ENCODE measurements at regions of chr4 and their contacts with region 1.

Region 1: DNA sequence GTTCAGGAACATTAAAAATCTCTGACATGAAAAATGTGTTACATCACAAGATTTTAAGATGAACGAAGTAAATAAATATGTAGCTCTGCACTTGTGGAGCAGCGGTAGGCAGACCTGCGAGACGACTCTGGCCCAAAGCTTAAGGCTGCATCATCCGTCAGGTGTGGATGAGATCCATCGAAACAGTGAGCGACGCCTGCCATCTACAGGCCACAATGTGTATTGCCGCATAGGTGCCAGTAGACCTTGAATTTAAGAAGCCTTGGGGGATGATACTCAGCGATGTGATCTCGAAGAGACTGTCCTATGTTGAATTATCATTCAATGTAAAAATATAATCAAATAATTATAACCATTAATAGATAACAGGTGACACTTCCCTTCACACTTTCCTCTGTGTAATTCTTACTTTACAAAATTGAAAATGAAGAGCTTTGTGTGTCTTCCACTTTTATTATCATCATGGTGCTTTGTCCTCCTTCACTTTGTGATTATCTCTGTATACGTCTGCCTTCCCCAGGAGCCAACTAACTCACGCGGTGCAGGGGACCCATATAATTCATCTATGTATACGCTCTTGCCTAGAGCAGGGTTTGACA is 851.0 kb downstream of the RAB28 start:
- H3K4me3 Mint-ChIP-seq: no peak overlapping the region
- H3K27ac Mint-ChIP-seq: no peak overlapping the region
- H3K4me1 Mint-ChIP-seq: no peaks in the 10 kb centered on the region
- H3K27me3 Mint-ChIP-seq: no peaks in the 10 kb centered on the region

Region 2: GRCh38 chr4:11765849-11766453 is 867.2 kb before region 1 on chr4:
- intact Hi-C with region 1: loop called (anchors 1 kb)
- H3K4me3 Mint-ChIP-seq: no peak overlapping the region
- H3K27ac Mint-ChIP-seq: no peak overlapping the region
- H3K4me1 Mint-ChIP-seq: no peaks in the 10 kb centered on the region
- H3K27me3 Mint-ChIP-seq: no peaks in the 10 kb centered on the region

Region 3: GRCh38 chr4:11805842-11806241 is 827.3 kb before region 1 on chr4:
- intact Hi-C with region 1: loop called (anchors 5 kb)
- H3K4me3 Mint-ChIP-seq: no peak overlapping the region
- H3K27ac Mint-ChIP-seq: no peak overlapping the region
- H3K4me1 Mint-ChIP-seq: no peaks in the 10 kb centered on the region
- H3K27me3 Mint-ChIP-seq: no peaks in the 10 kb centered on the region

Region 4: GRCh38 chr4:12041828-12042227 is 591.3 kb before region 1 on chr4:
- intact Hi-C with region 1: loop called (anchors 1 kb)
- H3K4me3 Mint-ChIP-seq: no peak overlapping the region
- H3K27ac Mint-ChIP-seq: no peak overlapping the region
- H3K4me1 Mint-ChIP-seq: no peaks in the 10 kb centered on the region
- H3K27me3 Mint-ChIP-seq: no peaks in the 10 kb centered on the region

Region 5: DNA sequence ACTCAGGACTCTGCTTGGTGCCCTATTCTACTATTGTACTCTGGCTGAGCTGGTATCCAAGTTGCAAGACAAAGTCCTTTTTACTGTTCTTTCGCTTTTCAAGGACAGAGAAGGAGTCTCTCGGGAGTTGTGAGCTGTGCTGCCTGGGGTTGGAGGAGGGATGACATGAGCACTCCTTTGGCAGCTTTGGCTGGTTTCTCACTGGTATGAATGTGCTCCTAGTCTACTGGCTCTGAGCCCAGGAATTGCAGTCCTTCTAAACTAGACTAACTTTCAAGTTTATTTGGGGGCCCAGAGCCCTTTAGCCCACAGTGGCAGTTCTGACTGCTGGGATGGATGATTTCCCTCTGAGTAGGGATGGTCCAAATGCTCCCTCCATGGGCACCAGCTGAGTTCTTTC is 146.2 kb before region 1 on chr4:
- intact Hi-C with region 1: no loop called
- H3K4me3 Mint-ChIP-seq: no peak overlapping the region
- H3K27ac Mint-ChIP-seq: no peak overlapping the region
- H3K4me1 Mint-ChIP-seq: no peaks in the 10 kb centered on the region
- H3K27me3 Mint-ChIP-seq: no peaks in the 10 kb centered on the region

Measured in dendritic cell treated with granulocyte-macrophage colony-stimulating factor and Interleukin-4, amounts not matched to agents 40 ng/mL and 50 ng/mL, for 4 days (primary cell).